ENCODE measurements at regions of chr11 and their contacts with region 1.

Region 1: GRCh38 chr11:76030286-76030685 is 176.0 kb downstream of the WNT11 start:
- DNase-seq: peak; percentile 96
- H3K4me3 ChIP-seq: peak overlapping the region in 1 of 3 experiments; percentile 20
- H3K27ac ChIP-seq: peak overlapping the region; percentile 97
- H3K4me1 ChIP-seq: peaks cover 38% of the 10 kb centered on the region
- H3K27me3 ChIP-seq: no peaks in the 10 kb centered on the region
- CTCF ChIP-seq: no peak
- POLR2A ChIP-seq: peak; percentile 60

Region 2: DNA sequence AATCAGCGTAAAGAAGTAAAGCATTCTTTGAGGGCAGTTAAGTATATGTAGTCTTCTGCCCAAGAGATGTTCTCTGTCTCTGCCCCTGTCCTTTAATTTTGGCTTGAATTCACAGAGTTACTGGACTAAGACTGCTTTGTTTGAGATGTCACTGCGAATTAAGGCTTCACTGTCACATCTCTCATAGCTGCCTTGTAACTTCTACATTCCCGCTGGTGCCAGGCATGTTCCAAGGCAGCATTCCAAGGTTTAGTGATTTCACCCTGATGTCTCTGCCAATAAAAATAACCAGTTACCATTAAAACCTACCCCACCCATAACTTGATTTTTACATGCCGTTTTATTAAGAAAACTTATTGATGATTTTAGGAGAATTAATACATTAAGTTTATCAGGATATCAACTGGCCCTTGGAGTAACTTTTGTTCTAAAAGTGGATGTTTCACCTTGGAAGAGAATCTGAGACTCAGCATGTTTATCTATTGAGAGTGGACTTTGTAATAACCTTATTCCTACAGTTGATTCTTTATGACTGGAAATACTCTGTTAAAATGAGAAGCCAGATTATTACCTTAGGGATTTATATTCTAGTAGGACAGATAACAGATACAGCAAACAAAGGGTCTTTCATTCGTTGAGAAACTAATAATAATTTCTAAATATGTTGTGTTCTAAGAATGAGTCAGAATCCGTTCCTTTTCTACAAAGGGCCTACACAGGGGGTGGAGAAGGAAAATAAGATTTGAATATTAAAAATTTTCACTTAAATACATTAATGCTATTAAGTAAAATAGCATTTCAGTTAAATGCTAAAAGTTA is 105.1 kb before region 1 on chr11:
- CTCF ChIA-PET with region 1: interaction called, 3 read pairs
- POLR2A ChIA-PET with region 1: no interaction called
- dilution Hi-C with region 1: no loop called
- intact Hi-C with region 1: loop called (anchors 5 kb)
- DNase-seq: peak; percentile 64
- H3K4me3 ChIP-seq: peak overlapping the region in 1 of 3 experiments; percentile 8
- H3K27ac ChIP-seq: peak overlapping the region; percentile 24
- H3K4me1 ChIP-seq: peaks cover 17% of the 10 kb centered on the region
- H3K27me3 ChIP-seq: no peaks in the 10 kb centered on the region
- CTCF ChIP-seq: no peak
- POLR2A ChIP-seq: no peak

Region 3: GRCh38 chr11:75966546-75967287 is 63.6 kb before region 1 on chr11:
- CTCF ChIA-PET with region 1: no interaction called
- POLR2A ChIA-PET with region 1: no interaction called
- dilution Hi-C with region 1: no loop called
- intact Hi-C with region 1: loop called (anchors 1 kb)
- DNase-seq: peak; percentile 83
- H3K4me3 ChIP-seq: peak overlapping the region in 1 of 3 experiments; percentile 1
- H3K27ac ChIP-seq: peak overlapping the region; percentile 53
- H3K4me1 ChIP-seq: peaks cover 27% of the 10 kb centered on the region
- H3K27me3 ChIP-seq: no peaks in the 10 kb centered on the region
- CTCF ChIP-seq: no peak
- POLR2A ChIP-seq: no peak

Region 4: DNA sequence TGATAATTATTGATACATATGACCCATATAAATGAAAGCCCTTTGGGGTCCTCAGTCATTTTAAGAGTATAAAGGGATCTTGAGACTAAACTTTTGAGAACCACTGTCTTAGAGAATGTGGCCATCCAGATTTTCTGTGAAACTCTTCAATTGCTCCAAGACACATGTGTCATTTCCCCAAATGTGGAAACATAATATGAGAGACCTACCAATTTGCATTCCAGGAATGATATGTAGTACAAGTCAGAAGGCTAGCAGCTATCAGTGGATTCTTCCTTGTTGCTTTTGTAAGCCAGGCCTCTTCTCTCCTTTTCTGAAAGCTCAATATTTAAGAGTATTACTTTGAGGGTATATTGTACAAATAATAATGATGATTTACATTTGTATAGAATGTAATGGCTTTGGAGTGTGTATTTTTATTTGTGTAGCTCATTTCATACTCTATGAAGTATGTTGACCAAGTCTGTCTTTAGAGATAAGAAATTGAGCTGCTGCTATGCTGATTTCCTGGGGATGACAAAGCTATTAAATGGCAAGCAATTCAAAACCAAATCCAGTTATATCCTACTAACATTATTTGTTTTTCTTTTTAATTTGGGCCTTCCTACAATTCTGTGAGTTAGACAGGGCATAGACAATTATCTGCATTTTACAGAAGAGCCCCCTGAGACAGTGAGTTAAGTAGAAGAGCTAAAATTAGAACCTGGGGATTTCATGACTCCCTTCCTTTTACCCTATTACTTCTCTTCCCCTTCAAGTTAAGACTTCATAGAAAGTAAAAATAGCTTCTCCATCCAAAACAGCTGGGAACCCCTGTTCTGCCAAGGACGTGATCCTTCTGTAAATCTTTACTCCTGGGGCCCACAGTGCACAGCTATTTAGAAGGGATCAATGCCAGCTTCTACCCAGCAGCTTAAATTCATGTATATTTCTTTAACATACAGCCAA is 44.1 kb after region 1 on chr11:
- CTCF ChIA-PET with region 1: interaction called, 6 read pairs
- POLR2A ChIA-PET with region 1: no interaction called
- dilution Hi-C with region 1: no loop called
- intact Hi-C with region 1: loop called (anchors 2 kb)
- DNase-seq: peak; percentile 75
- H3K4me3 ChIP-seq: no peak overlapping the region
- H3K27ac ChIP-seq: peak overlapping the region; percentile 44
- H3K4me1 ChIP-seq: peaks cover 35% of the 10 kb centered on the region
- H3K27me3 ChIP-seq: no peaks in the 10 kb centered on the region
- CTCF ChIP-seq: no peak
- POLR2A ChIP-seq: no peak